A549 (cell line): ENCODE measurements at regions of chr9 and their contacts with region 1.

Region 1: GRCh38 chr9:89602978-89603766 is 1.6 kb upstream of the GADD45G start:
- DNase-seq: peak; percentile 71 to 88
- ATAC-seq: peak; percentile 60 to 77
- H3K4me3 ChIP-seq: peak overlapping the region; percentile 48
- H3K27ac ChIP-seq: peak overlapping the region in 1 of 2 experiments; percentile 36; a peak in 3 of 6 replicates
- H3K4me1 ChIP-seq: peaks cover 21% of the 10 kb centered on the region
- CTCF ChIP-seq: peak; percentile 87
- EP300 ChIP-seq: no peak
- POLR2A ChIP-seq: no peak
- RAD21 ChIP-seq: peak; percentile 91 to 95

Region 2: DNA sequence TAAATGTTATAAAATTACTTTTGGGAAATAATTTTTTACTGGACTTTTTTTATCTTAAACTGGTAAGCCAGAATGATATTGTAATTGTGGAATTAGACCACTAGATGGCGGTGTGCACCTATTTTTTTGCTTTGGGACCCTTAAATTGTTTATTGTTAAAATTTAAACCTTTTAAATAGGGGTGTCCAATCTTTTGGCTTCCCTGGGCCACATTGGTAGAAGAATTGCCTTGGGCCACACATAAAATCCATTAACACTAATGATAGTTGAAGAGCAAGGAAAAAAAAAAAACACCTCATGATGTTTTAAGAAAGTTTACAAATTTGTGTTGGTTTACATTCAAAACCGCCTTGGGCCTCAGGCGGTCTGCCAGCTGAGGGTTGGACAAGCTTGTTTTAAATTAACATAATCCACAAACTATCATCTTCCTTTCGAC is 26.8 kb before region 1 on chr9:
- CTCF ChIA-PET with region 1: interaction called, 75 read pairs
- POLR2A ChIA-PET with region 1: no interaction called
- DNase-seq: peak; percentile 38
- ATAC-seq: no peak
- H3K4me3 ChIP-seq: no peak overlapping the region
- H3K27ac ChIP-seq: no peak overlapping the region
- H3K4me1 ChIP-seq: no peaks in the 10 kb centered on the region
- CTCF ChIP-seq: peak; percentile 81
- EP300 ChIP-seq: no peak
- POLR2A ChIP-seq: no peak
- RAD21 ChIP-seq: peak; percentile 67 to 69

Region 3: GRCh38 chr9:89629081-89629976 is 26.2 kb after region 1 on chr9:
- CTCF ChIA-PET with region 1: interaction called, 27 read pairs
- POLR2A ChIA-PET with region 1: no interaction called
- DNase-seq: no peak
- ATAC-seq: no peak
- H3K4me3 ChIP-seq: no peak overlapping the region
- H3K27ac ChIP-seq: no peak overlapping the region
- H3K4me1 ChIP-seq: no peaks in the 10 kb centered on the region
- CTCF ChIP-seq: no peak
- EP300 ChIP-seq: no peak
- POLR2A ChIP-seq: no peak
- RAD21 ChIP-seq: no peak

Region 4: GRCh38 chr9:90062982-90063381 is 459.8 kb after region 1 on chr9:
- CTCF ChIA-PET with region 1: interaction called, 12 read pairs
- POLR2A ChIA-PET with region 1: no interaction called
- DNase-seq: no peak
- ATAC-seq: no peak
- H3K4me3 ChIP-seq: no peak overlapping the region
- H3K27ac ChIP-seq: no peak overlapping the region
- H3K4me1 ChIP-seq: no peaks in the 10 kb centered on the region; the same call in 2 of the 3 replicates
- CTCF ChIP-seq: no peak
- EP300 ChIP-seq: no peak
- POLR2A ChIP-seq: no peak
- RAD21 ChIP-seq: no peak

Region 5: DNA sequence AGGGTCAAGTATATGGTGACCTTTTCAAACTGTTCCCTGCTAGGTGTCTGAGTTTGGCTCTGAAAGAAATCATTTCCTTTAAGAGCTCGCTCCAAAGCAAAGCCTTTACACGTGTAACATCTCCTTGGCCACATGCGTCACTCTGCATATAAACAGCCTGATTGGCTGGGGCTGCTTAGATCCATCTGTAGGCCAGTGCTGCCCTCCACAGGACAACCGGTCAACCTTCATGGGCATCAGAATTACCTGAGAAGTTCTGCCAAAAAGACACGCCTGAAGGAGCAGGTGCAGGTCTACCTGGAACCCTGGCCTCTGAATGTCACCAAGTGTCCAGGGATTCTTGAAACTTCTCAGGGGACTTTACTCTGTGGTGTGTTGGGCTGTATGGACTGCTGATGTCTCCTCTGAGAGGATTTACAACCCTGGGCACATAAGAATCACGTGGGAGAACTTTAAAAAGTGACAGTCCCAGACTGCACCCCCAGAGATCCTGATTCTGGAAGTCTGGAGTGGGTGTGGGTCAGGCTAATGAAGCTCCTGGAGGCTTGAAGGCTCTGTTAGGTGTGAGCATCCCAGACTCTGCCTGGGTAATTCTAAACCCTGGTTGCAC is 499.2 kb after region 1 on chr9:
- CTCF ChIA-PET with region 1: interaction called, 371 read pairs
- POLR2A ChIA-PET with region 1: interaction called, 4 read pairs
- DNase-seq: peak; percentile 88 to 91
- ATAC-seq: peak; percentile 93 to 99
- H3K4me3 ChIP-seq: no peak overlapping the region
- H3K27ac ChIP-seq: no peak overlapping the region
- H3K4me1 ChIP-seq: no peaks in the 10 kb centered on the region
- CTCF ChIP-seq: peak; percentile 84
- EP300 ChIP-seq: no peak
- POLR2A ChIP-seq: no peak
- RAD21 ChIP-seq: peak; percentile 91 to 96